ENCODE measurements at regions of chr6 and their contacts with region 1.

Region 1: GRCh38 chr6:121849477-121849876 is 414.0 kb downstream of the GJA1 start:
- DNase-seq: peak in 4 of 5 donors; percentile 27 to 66 (median 60)
- ATAC-seq: peak; percentile 79 to 94 (median 91)
- H3K4me3 ChIP-seq: no peak overlapping the region
- H3K27ac ChIP-seq: peak overlapping the region in 4 of 12 donors; percentile 18 to 24 (median 18)
- H3K4me1 ChIP-seq: peaks cover 0 to 26% (median 7%) of the 10 kb centered on the region in 12 donors
- H3K27me3 ChIP-seq: no peaks in the 10 kb centered on the region
- CTCF ChIP-seq: peak; percentile 58 to 86 (median 80)
- POLR2A ChIP-seq: no peak

Region 2: GRCh38 chr6:121365536-121366521 is 483.6 kb before region 1 on chr6:
- intact Hi-C with region 1: no loop called
- DNase-seq: no peak
- ATAC-seq: no peak
- H3K4me3 ChIP-seq: no peak overlapping the region
- H3K27ac ChIP-seq: no peak overlapping the region
- H3K4me1 ChIP-seq: no peaks in the 10 kb centered on the region
- H3K27me3 ChIP-seq: peaks cover 0 to 6% (median 0%) of the 10 kb centered on the region in 9 donors
- CTCF ChIP-seq: no peak
- POLR2A ChIP-seq: no peak

Region 3: DNA sequence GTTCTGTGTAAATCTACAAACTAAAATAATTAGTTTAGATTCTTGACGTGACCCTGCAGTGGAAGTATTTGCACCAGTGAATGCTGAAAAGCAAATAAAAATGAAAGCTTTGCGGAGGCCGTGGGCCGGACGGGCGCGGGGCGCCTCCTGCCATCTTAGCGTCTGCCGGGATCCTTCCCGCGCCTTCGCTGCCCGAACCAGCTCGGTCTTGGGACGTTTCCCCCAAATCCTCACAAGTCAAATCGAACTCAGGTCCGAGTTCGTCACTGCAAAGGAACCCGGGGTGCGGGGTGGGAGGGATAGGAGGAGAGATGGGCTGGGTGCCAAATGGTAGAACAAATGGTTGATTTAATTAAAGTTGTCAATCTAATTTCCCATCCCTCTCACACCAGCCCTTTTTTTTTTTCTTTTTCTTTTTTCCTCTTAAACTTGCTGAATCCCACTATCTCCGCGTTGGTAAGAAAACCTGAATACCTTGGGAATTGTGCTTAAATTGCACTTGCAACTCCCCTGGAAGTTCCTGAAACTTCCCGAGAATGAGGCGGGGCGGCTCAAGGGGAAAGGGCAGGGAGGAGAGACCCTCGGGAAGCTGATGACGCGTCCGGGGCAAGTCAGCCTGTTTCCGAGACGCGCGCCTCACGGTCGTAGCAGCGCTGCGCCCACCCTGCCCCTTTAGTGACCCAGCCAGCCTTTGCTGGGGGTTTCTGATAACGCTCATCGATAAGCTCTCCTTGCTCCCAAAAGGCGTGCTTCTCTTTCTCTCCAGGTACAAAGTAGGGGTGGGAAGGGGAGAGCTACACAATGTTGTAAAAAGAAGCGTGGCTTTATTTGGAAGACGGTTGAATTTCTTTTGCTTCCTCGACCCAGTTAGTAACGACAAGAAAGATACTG is 412.3 kb before region 1 on chr6:
- intact Hi-C with region 1: loop called in 8 of 10 experiments (anchors 2 to 5 kb)
- DNase-seq: peak; percentile 59 to 72 (median 66)
- ATAC-seq: peak in 3 of 4 donors; percentile 46 to 66 (median 54)
- H3K4me3 ChIP-seq: peak overlapping the region; percentile 47 to 86 (median 72)
- H3K27ac ChIP-seq: peak overlapping the region; percentile 82 to 95 (median 92)
- H3K4me1 ChIP-seq: peaks cover 0 to 42% (median 6%) of the 10 kb centered on the region in 12 donors
- H3K27me3 ChIP-seq: peaks cover 0 to 22% (median 0%) of the 10 kb centered on the region in 9 donors
- CTCF ChIP-seq: no peak
- POLR2A ChIP-seq: no peak

Region 4: DNA sequence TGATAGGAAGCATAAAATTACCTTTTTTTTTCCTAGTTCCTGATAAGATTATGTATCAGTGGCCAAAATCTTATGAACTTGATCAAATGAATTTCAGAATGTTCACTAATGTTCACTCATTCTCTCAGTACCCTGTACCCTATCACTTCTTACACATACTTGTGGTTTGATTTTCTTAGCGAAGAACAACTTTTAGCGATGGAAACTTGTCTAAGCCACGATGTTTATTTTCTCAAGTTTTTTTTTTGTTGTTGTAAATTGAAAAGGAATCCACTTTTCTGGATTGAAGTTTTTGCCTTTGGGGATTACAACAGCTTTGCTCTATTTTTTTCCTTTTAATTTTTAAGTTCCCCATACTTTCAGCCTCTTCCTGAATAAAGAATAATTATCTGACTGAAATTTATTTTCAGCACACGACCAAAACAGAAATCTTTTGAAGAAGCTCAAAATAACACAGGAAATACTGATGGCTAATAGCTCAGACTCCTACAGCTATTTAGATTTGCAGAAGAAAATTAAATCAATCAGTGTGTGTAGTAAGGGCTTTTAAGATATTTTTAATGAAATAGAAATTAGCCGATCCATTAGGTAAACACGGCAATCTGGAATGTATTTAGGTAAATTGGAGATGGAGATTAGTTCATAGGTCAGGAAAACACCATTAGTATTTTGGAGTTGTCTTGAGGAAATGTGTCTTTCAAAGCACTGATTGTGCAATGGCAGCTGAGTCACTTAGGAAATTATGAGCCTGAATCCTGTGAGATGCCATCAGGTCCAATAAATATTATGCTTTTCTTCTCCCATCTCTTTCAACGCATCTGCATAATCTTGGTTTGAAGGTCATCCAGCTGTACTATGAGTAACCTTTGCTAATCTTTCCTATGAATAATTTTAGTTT is 196.5 kb before region 1 on chr6:
- intact Hi-C with region 1: loop called in 1 of 10 experiments (anchors 10 kb)
- DNase-seq: no peak
- ATAC-seq: peak; percentile 47 to 83 (median 68)
- H3K4me3 ChIP-seq: peak overlapping the region in 1 of 12 donors; percentile 1
- H3K27ac ChIP-seq: peak overlapping the region in 11 of 12 donors; percentile 23 to 80 (median 62)
- H3K4me1 ChIP-seq: peaks cover 0 to 15% (median 4%) of the 10 kb centered on the region in 12 donors
- H3K27me3 ChIP-seq: no peaks in the 10 kb centered on the region
- CTCF ChIP-seq: no peak
- POLR2A ChIP-seq: no peak

Region 5: GRCh38 chr6:121711472-121711871 is 138.0 kb before region 1 on chr6:
- intact Hi-C with region 1: loop called in 1 of 10 experiments (anchors 10 kb)
- DNase-seq: peak in 4 of 5 donors; percentile 32 to 68 (median 58)
- ATAC-seq: peak; percentile 71 to 91 (median 74)
- H3K4me3 ChIP-seq: no peak overlapping the region
- H3K27ac ChIP-seq: peak overlapping the region in 8 of 12 donors; percentile 13 to 62 (median 32)
- H3K4me1 ChIP-seq: peaks cover 0 to 6% (median 0%) of the 10 kb centered on the region in 12 donors
- H3K27me3 ChIP-seq: no peaks in the 10 kb centered on the region
- CTCF ChIP-seq: no peak
- POLR2A ChIP-seq: no peak

Region 6: GRCh38 chr6:122033539-122034181 is 184.2 kb after region 1 on chr6:
- intact Hi-C with region 1: loop called in 8 of 10 experiments (anchors 5 to 10 kb)
- DNase-seq: no peak
- ATAC-seq: peak; percentile 71 to 90 (median 86)
- H3K4me3 ChIP-seq: no peak overlapping the region
- H3K27ac ChIP-seq: peak overlapping the region in 3 of 12 donors; percentile 6 to 30 (median 9)
- H3K4me1 ChIP-seq: peaks cover 0 to 8% (median 0%) of the 10 kb centered on the region in 12 donors
- H3K27me3 ChIP-seq: no peaks in the 10 kb centered on the region
- CTCF ChIP-seq: peak; percentile 48 to 77 (median 63)
- POLR2A ChIP-seq: no peak

Region 7: GRCh38 chr6:122082370-122082769 is 232.9 kb after region 1 on chr6:
- intact Hi-C with region 1: no loop called
- DNase-seq: no peak
- ATAC-seq: no peak
- H3K4me3 ChIP-seq: no peak overlapping the region
- H3K27ac ChIP-seq: no peak overlapping the region
- H3K4me1 ChIP-seq: no peaks in the 10 kb centered on the region
- H3K27me3 ChIP-seq: no peaks in the 10 kb centered on the region
- CTCF ChIP-seq: no peak
- POLR2A ChIP-seq: no peak

Region 8: DNA sequence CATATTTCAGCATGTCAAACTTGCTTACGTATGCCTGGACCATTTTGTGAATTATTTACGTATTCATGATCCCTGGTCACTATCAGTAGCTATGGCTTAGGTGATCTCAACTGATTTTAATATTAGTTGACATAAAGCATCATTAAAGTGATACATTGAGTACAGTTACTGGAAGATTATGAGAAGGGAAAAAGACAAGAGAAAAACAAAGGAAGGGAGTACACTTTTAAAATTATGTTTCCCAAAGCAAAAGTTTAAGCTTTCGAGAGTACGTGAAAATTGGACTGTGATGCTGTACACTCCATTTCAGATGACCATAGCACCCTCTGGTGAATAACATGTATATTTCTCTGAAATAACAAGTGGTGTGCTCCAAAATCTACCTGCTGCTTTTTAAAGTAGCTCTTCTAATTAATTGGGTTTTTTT is 334.9 kb after region 1 on chr6:
- intact Hi-C with region 1: loop called in 9 of 10 experiments (anchors 5 to 10 kb)
- DNase-seq: no peak
- ATAC-seq: peak; percentile 51 to 83 (median 74)
- H3K4me3 ChIP-seq: peak overlapping the region in 7 of 12 donors; percentile 22 to 43 (median 34)
- H3K27ac ChIP-seq: no peak overlapping the region
- H3K4me1 ChIP-seq: peaks cover 0 to 10% (median 0%) of the 10 kb centered on the region in 12 donors
- H3K27me3 ChIP-seq: no peaks in the 10 kb centered on the region
- CTCF ChIP-seq: peak; percentile 16 to 61 (median 49)
- POLR2A ChIP-seq: no peak